Natural killer cell (primary cell): ENCODE measurements at regions of chr1 and their contacts with region 1.

Region 1: DNA sequence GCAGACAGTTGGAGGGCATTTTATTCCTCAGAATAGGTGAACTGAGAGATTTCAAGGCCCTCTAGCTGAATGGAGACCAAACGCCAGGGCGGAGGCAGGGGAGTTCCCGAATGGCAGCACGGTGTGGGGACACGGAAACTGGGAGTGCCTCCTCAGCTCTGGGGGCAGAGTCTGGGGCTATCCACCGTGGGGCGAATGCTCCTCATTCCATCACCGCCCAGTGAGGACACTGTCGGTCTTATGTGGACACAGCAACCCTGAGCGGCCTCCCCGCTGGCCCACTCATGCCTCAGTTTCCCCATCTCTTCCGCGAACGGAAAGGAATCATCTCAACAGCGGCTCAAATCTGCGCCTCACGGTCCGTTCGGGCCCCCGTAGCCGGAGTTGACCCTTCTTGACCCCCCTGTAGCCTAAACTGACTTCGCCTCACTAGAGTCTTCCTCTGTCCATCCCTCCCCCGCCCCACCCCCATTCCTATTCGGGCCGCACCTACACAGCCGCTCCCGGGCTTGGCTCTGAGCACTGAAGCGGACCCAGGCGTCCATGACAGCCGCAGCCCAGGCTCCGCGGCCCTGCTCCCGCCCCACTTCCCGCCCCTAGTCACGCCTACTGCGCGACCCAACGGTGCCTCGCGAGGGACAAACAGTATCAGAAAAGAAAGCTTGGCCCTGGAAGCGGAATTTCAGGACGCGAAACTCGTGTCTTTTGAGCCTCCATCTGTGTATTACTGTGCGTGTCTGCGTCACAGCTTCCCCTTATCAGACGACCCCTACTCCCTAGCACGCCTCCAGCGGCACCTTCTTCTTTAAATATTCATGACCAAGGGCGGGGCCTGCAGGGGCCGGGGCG is at the start of gene PEX11B:
- DNase-seq: peak; percentile 90 to 96
- ATAC-seq: peak; percentile 89 to 96 (median 89)
- H3K4me3 ChIP-seq: peak within 1 kb of the TSS; percentile 65
- H3K4me3 Mint-ChIP-seq: peak within 1 kb of the TSS; percentile 95
- H3K27ac ChIP-seq: peak within 1 kb of the TSS; percentile 82
- H3K27ac Mint-ChIP-seq: peak within 1 kb of the TSS; percentile 91 to 92
- H3K4me1 ChIP-seq: peaks cover 22% of the 10 kb centered on the region
- H3K4me1 Mint-ChIP-seq: peaks cover 33 to 43% of the 10 kb centered on the region in 2 donors
- H3K27me3 ChIP-seq: no peaks in the 10 kb centered on the region
- H3K27me3 Mint-ChIP-seq: no peaks in the 10 kb centered on the region
- CTCF ChIP-seq: no peak
- total RNA-seq, gene PEX11B: 20.6 to 26.0 (median 24.9) TPM

Region 2: GRCh38 chr1:145858894-145859490 is 59.4 kb before region 1 on chr1 and contains the start of gene PIAS3:
- intact Hi-C with region 1: loop called (anchors 2 kb)
- DNase-seq: peak; percentile 80 to 88
- ATAC-seq: peak; percentile 85 to 93 (median 89)
- H3K4me3 ChIP-seq: peak within 1 kb of the TSS; percentile 94
- H3K4me3 Mint-ChIP-seq: peak within 1 kb of the TSS; percentile 94
- H3K27ac ChIP-seq: peak within 1 kb of the TSS; percentile 74
- H3K27ac Mint-ChIP-seq: peak within 1 kb of the TSS; percentile 79 to 96
- H3K4me1 ChIP-seq: peaks cover 18% of the 10 kb centered on the region
- H3K4me1 Mint-ChIP-seq: peaks cover 11 to 36% of the 10 kb centered on the region in 2 donors
- H3K27me3 ChIP-seq: no peaks in the 10 kb centered on the region
- H3K27me3 Mint-ChIP-seq: no peaks in the 10 kb centered on the region
- CTCF ChIP-seq: no peak
- total RNA-seq, gene PIAS3: 40.1 to 53.3 (median 51.0) TPM

Region 3: DNA sequence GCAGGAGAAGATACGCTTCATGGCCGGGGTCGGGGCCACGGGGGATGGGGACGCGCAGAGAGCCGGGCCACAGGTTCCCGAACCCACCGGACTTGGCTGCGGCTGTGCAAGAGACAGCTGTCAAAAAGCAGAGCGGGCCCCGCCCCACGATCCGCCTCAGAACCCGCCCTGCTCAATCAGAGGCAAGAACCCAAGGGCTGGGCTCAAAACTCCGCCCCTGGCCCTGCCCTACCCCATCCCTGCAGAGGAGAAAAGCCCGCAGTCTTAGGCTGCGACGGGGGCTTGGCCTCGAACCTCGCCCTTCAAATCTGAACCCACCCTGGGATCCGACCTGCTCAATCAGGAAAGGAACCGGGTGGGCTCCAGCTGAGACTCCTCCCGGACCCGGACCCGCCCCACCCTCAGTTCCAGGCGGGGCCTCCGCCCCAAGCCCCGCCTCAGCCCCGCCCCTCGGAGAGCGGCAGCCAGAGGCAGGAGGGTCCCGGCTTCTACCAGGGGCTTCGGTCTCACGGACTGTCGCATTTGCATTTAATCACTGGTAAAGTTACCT is 32.6 kb before region 1 on chr1 and contains the start of gene ANKRD35:
- intact Hi-C with region 1: loop called (anchors 1 kb)
- DNase-seq: peak; percentile 82 to 91
- ATAC-seq: peak; percentile 98 to 99 (median 98)
- H3K4me3 ChIP-seq: peak within 1 kb of the TSS; percentile 76
- H3K4me3 Mint-ChIP-seq: peak within 1 kb of the TSS; percentile 52
- H3K27ac ChIP-seq: no peak within 1 kb of the TSS
- H3K27ac Mint-ChIP-seq: peak within 1 kb of the TSS in 1 of 2 donors; percentile 6
- H3K4me1 ChIP-seq: peaks cover 16% of the 10 kb centered on the region
- H3K4me1 Mint-ChIP-seq: peaks cover 4 to 12% of the 10 kb centered on the region in 2 donors
- H3K27me3 ChIP-seq: peaks cover 11% of the 10 kb centered on the region
- H3K27me3 Mint-ChIP-seq: peaks cover 10 to 18% of the 10 kb centered on the region in 2 donors
- CTCF ChIP-seq: no peak
- total RNA-seq, gene ANKRD35: 0.14 to 0.23 (median 0.23) TPM